Mammary epithelial cell (primary cell): ENCODE measurements at regions of chr19 and their contacts with region 1.

Region 1: GRCh38 chr19:3324321-3324856 is 42.0 kb upstream of the NFIC start:
- DNase-seq: no peak
- H3K4me3 ChIP-seq: no peak overlapping the region
- H3K27ac ChIP-seq: no peak overlapping the region
- H3K4me1 ChIP-seq: no peaks in the 10 kb centered on the region
- H3K27me3 ChIP-seq: no peaks in the 10 kb centered on the region
- CTCF ChIP-seq: peak; percentile 69 to 80

Region 2: GRCh38 chr19:2962045-2962561 is 362.3 kb before region 1 on chr19:
- CTCF ChIA-PET with region 1: no interaction called
- dilution Hi-C with region 1: no loop called
- in situ Hi-C with region 1: no loop called
- intact Hi-C with region 1: loop called (anchors 5 kb)
- DNase-seq: peak; percentile 38
- H3K4me3 ChIP-seq: no peak overlapping the region
- H3K27ac ChIP-seq: no peak overlapping the region
- H3K4me1 ChIP-seq: no peaks in the 10 kb centered on the region
- H3K27me3 ChIP-seq: no peaks in the 10 kb centered on the region
- CTCF ChIP-seq: peak; percentile 45 to 66

Region 3: DNA sequence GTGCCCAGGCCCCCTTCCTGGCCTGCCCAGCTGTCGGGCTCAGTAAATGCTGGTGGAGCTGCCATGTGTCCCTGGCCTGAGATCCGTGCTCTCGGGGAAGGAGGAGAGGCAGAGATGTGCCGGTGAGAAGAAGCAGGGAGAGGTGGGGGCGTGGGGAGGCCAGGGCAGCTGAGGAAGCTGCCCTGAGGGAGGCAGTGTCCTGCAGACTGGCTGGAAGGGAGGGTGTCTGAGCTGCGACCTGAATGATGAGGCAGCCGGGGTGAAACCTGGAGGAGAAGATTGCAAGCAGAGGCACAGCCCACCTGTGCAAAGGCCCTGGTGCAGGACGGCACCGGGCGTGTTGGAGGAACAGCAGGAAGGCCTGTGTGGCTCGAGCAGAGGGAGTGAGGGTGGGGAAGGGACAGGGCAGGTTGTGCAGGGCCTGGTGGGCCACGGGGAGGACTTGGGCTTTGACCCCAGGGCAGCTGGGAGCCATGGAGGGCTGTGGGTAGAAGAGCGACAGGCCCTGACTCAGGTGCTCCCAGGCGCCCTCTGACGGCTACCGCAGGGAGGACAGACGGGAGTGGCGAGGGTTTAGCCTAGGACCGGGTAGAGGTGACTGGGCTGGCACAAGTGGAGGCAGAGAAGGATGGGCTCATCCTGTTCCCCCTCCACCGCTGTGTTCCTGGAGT is 113.9 kb before region 1 on chr19:
- CTCF ChIA-PET with region 1: no interaction called
- dilution Hi-C with region 1: loop called (anchors 5 kb)
- in situ Hi-C with region 1: no loop called
- intact Hi-C with region 1: no loop called
- DNase-seq: peak; percentile 19
- H3K4me3 ChIP-seq: no peak overlapping the region
- H3K27ac ChIP-seq: no peak overlapping the region
- H3K4me1 ChIP-seq: no peaks in the 10 kb centered on the region
- H3K27me3 ChIP-seq: no peaks in the 10 kb centered on the region
- CTCF ChIP-seq: peak; percentile 49 to 75

Region 4: GRCh38 chr19:3403489-3404323 is 79.3 kb after region 1 on chr19:
- CTCF ChIA-PET with region 1: no interaction called
- dilution Hi-C with region 1: loop called (anchors 5 kb)
- in situ Hi-C with region 1: no loop called
- intact Hi-C with region 1: no loop called
- DNase-seq: peak; percentile 11
- H3K4me3 ChIP-seq: peak overlapping the region in 1 of 3 experiments; percentile 2
- H3K27ac ChIP-seq: peak overlapping the region; percentile 12
- H3K4me1 ChIP-seq: peaks cover 20% of the 10 kb centered on the region
- H3K27me3 ChIP-seq: no peaks in the 10 kb centered on the region
- CTCF ChIP-seq: no peak

Region 5: GRCh38 chr19:3434712-3435553 is 110.5 kb after region 1 on chr19:
- CTCF ChIA-PET with region 1: interaction called, 3 read pairs
- dilution Hi-C with region 1: no loop called
- in situ Hi-C with region 1: loop called in 1 of 2 experiments (anchors 10 kb)
- intact Hi-C with region 1: loop called (anchors 1 kb)
- DNase-seq: peak; percentile 94
- H3K4me3 ChIP-seq: peak overlapping the region; percentile 24 to 51 (median 49)
- H3K27ac ChIP-seq: peak overlapping the region; percentile 59
- H3K4me1 ChIP-seq: peaks cover 11% of the 10 kb centered on the region
- H3K27me3 ChIP-seq: no peaks in the 10 kb centered on the region
- CTCF ChIP-seq: no peak

Region 6: GRCh38 chr19:3471954-3472655 is 147.7 kb after region 1 on chr19:
- CTCF ChIA-PET with region 1: no interaction called
- dilution Hi-C with region 1: loop called (anchors 5 kb)
- in situ Hi-C with region 1: loop called (anchors 5 to 10 kb)
- intact Hi-C with region 1: loop called (anchors 1 kb)
- DNase-seq: no peak
- H3K4me3 ChIP-seq: no peak overlapping the region
- H3K27ac ChIP-seq: no peak overlapping the region
- H3K4me1 ChIP-seq: no peaks in the 10 kb centered on the region
- H3K27me3 ChIP-seq: no peaks in the 10 kb centered on the region
- CTCF ChIP-seq: peak; percentile 53 to 85

Region 7: GRCh38 chr19:3618144-3618810 is 293.9 kb after region 1 on chr19:
- CTCF ChIA-PET with region 1: no interaction called
- dilution Hi-C with region 1: loop called (anchors 5 kb)
- in situ Hi-C with region 1: no loop called
- intact Hi-C with region 1: loop called (anchors 1 kb)
- DNase-seq: no peak
- H3K4me3 ChIP-seq: no peak overlapping the region
- H3K27ac ChIP-seq: no peak overlapping the region
- H3K4me1 ChIP-seq: no peaks in the 10 kb centered on the region
- H3K27me3 ChIP-seq: no peaks in the 10 kb centered on the region
- CTCF ChIP-seq: peak; percentile 70 to 91